Left cardiac atrium (tissue), 4 donors: ENCODE measurements at regions of chr22 and their contacts with region 1.

Region 1: GRCh38 chr22:37538590-37539357 is 19.6 kb upstream of the CARD10 start:
- DNase-seq: peak; percentile 95
- ATAC-seq: peak; percentile 98 to 99

Region 2: GRCh38 chr22:37594237-37594636 is 55.5 kb after region 1 on chr22:
- intact Hi-C with region 1: loop called (anchors 1 to 5 kb)
- DNase-seq: no peak
- ATAC-seq: no peak

Region 3: GRCh38 chr22:37672206-37672919 is 133.6 kb after region 1 on chr22:
- intact Hi-C with region 1: no loop called
- DNase-seq: no peak
- ATAC-seq: no peak